Activated B cell treated with CpG ODN at 0.5 μM for 24 hours (primary cell): ENCODE measurements at regions of chr19 and their contacts with region 1.

Region 1: DNA sequence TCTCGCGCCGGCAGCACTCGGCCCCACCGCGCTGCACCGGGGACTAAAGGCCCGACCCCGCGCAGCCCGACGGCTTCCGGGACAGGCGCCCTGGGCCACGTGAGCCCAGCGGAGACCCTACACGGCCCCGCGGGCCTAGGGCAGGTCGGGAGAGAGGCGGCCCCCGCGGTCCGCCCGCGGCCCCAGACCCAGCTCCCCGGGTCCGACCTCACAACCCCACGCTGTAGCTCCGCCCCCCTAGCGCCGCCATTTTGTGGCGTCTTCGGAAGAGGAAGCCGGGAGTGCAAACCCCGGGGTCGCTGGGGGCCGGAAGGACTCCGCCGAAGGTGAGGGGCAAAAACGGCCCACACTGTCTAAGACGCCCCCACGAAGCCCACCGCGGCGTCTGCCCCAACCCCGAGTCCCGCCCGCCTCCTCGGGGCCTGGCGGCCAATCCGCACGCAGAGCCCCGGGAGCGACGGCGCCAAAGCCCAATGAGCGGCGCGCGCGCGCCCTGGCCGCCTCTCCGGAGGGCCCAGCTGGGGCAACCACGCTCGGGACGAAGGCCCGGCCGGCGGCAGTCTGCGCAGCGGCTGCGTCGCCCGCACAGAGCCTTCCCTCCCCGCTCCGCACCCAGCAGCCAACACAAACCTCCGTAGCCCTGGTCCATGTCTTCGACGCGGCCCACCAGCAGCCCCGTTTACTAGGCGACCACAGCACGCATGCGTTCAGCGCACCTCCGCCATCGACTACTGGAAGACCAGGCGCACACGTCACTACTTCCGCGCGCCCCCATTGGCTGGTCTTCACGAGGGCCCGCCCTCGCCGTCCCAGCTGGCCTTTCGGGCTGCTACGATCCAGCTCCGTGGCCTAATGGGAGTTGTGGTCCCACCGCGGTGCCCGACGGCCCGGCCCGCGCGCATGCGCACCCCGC is at the start of gene AKAP8:
- DNase-seq: peak; percentile 96
- ATAC-seq: peak; percentile 91
- H3K4me3 Mint-ChIP-seq: peak within 1 kb of the TSS; percentile 100
- H3K27ac Mint-ChIP-seq: peak within 1 kb of the TSS; percentile 99
- H3K4me1 Mint-ChIP-seq: peaks cover 43% of the 10 kb centered on the region
- H3K27me3 Mint-ChIP-seq: no peaks in the 10 kb centered on the region
- CTCF ChIP-seq: no peak
- total RNA-seq, gene AKAP8: 74.8 and 79.0 TPM in 2 replicates

Region 2: DNA sequence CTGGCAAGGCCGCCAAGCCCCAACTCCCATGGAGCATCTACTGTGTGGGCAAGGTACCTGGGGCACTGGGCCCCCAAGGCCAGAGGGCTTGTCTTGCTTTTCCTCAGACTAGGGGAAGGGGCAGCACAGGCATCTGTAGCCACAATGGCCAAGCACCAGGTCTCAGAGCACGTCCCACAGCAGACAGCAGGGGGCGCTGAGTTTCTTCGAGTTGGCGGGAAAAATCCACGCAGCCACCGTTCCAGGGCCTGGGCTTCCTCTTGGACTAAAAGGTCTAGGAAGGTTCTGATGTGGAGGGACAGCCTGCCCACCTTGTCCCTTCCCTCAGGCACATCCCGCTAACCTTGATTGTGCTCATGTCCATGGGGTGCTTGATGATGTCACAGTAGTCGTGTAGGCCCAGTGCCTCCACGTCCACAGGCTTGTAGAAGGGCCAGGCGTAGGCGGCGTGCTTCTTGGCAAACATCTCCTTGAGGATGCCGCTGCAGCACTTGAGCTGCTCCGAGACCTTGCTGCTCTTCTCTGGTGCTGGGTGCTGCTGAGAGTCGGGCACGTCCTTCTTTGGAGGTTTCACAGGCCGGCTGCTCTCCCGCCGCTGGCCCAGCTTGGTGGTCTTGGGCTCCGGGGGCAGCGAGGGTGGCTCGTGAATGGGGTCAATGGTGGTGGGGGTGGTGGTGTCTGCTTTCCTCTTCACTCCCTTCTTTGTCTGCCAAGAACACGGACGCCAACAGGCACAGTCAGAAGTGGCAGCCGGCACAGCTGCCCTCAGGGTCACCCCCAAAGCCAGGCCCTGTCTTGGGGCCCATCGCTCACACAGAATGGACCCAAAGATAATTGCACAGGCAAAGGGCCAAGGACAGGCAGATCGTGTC is 115.0 kb before region 1 on chr19:
- CTCF ChIA-PET with region 1: interaction called, 9 read pairs
- POLR2A ChIA-PET with region 1: interaction called, 4 read pairs
- intact Hi-C with region 1: loop called (anchors 1 kb)
- DNase-seq: peak; percentile 72
- ATAC-seq: peak; percentile 76
- H3K4me3 Mint-ChIP-seq: no peak overlapping the region
- H3K27ac Mint-ChIP-seq: no peak overlapping the region
- H3K4me1 Mint-ChIP-seq: peaks cover 9% of the 10 kb centered on the region
- H3K27me3 Mint-ChIP-seq: no peaks in the 10 kb centered on the region
- CTCF ChIP-seq: peak; percentile 36

Region 3: GRCh38 chr19:15332311-15332996 is 46.9 kb before region 1 on chr19 and contains the start of gene BRD4:
- CTCF ChIA-PET with region 1: interaction called, 3 read pairs
- POLR2A ChIA-PET with region 1: interaction called, 83 read pairs
- intact Hi-C with region 1: loop called (anchors 1 kb)
- DNase-seq: peak; percentile 86
- ATAC-seq: peak; percentile 35
- H3K4me3 Mint-ChIP-seq: peak within 1 kb of the TSS; percentile 95
- H3K27ac Mint-ChIP-seq: peak within 1 kb of the TSS; percentile 95
- H3K4me1 Mint-ChIP-seq: peaks cover 60% of the 10 kb centered on the region
- H3K27me3 Mint-ChIP-seq: no peaks in the 10 kb centered on the region
- CTCF ChIP-seq: no peak
- total RNA-seq, gene BRD4: 144 and 164 TPM in 2 replicates

Region 4: DNA sequence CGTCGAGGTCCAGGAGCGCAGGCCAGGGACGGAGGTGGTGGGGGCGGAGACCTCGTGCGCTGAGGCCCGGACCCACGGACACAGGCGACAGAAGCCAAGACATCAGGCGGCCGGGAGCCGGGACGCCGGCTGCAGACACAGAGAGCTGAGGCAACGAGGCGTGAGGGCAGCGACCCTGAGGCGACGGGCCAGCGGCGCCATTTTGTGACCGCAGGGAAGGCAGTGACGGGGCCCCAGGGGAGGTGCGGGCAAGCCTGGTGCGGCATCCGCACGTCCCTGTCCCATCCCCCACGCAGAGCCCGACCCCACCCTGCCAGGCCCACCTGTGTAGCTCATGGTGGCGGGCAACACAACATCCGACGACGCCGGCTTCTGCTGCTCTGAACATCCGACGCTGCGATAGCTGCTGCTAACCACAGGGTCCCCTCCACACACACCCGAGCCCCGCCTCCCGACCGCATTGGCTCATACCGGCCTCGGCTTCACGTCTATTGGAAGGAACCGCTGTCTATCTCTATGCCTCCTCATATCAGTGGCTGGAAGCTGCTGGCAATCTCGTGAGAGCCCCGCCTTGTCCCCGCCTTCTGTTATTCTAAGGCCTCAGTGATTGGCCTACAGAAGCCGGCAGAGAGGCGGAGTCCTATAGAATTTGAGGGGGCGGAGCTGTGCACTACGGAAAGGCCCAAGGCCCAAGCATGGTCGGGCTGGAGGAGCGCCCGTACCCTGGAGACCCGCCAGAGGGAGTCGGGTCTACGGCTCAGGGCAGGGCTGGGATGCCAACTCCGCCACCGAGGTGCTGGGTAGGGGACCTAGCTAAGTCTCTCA is 39.5 kb after region 1 on chr19 and contains the start of gene AKAP8L:
- CTCF ChIA-PET with region 1: interaction called, 16 read pairs
- POLR2A ChIA-PET with region 1: interaction called, 82 read pairs
- intact Hi-C with region 1: loop called (anchors 1 kb)
- DNase-seq: peak; percentile 94
- ATAC-seq: peak; percentile 92
- H3K4me3 Mint-ChIP-seq: peak within 1 kb of the TSS; percentile 99
- H3K27ac Mint-ChIP-seq: peak within 1 kb of the TSS; percentile 99
- H3K4me1 Mint-ChIP-seq: peaks cover 42% of the 10 kb centered on the region
- H3K27me3 Mint-ChIP-seq: no peaks in the 10 kb centered on the region
- CTCF ChIP-seq: no peak
- total RNA-seq, gene AKAP8L: 126 and 163 TPM in 2 replicates

Region 5: DNA sequence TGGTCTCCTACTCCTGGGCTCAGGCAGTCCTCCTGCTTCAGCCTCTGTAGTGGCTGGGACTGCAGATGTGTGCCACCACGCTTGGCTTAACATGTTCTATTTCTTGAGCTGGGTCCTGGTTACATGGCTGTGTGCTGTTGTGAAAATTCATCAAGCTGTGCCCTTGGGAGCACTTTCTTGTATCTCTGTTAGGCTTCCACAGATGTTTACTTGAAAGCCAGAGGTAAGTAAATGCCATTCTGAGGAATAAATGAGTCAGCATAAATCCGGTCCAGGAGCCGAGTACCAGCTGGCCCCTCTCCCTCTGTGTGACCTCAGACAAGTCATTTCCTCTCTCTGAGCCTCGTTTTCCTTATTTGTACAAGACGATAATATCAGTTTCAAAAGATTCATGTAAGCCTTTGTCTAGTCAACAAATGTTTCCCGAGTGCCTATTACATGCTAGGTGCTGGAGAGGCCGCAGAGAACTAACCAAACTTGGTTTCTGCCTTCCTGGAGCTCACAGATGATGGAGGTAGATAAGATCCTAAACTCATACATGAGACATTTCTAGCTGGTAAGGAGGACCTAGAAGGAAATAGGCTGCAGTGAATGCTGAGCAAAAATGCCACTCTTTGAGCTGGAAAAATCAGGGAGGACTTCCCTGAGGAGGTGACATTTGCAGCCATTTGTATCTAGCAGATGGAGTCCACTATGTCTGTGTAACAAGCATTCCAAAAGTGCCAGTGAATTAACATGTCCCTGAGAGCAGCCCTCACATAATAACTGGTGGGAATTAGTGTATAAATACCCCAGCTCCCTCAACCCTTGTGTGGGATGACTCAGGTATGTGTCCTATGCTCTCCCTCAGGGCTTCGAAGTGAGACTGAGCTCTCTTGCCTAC is 87.8 kb after region 1 on chr19:
- CTCF ChIA-PET with region 1: no interaction called
- POLR2A ChIA-PET with region 1: interaction called, 11 read pairs
- intact Hi-C with region 1: no loop called
- DNase-seq: no peak
- ATAC-seq: no peak
- H3K4me3 Mint-ChIP-seq: peak overlapping the region; percentile 50
- H3K27ac Mint-ChIP-seq: peak overlapping the region; percentile 12
- H3K4me1 Mint-ChIP-seq: peaks cover 50% of the 10 kb centered on the region
- H3K27me3 Mint-ChIP-seq: peaks cover 15% of the 10 kb centered on the region
- CTCF ChIP-seq: no peak